ENCODE measurements at regions of chr1 and their contacts with region 1.

Region 1: GRCh38 chr1:27341525-27342252 is at the start of gene SYTL1:
- DNase-seq: peak; percentile 62
- H3K4me3 Mint-ChIP-seq: peak within 1 kb of the TSS; percentile 84
- H3K27ac Mint-ChIP-seq: peak within 1 kb of the TSS; percentile 87
- H3K4me1 Mint-ChIP-seq: peaks cover 45% of the 10 kb centered on the region
- H3K27me3 Mint-ChIP-seq: no peaks in the 10 kb centered on the region
- total RNA-seq, gene SYTL1: 20.0 and 25.7 TPM in 2 replicates

Region 2: DNA sequence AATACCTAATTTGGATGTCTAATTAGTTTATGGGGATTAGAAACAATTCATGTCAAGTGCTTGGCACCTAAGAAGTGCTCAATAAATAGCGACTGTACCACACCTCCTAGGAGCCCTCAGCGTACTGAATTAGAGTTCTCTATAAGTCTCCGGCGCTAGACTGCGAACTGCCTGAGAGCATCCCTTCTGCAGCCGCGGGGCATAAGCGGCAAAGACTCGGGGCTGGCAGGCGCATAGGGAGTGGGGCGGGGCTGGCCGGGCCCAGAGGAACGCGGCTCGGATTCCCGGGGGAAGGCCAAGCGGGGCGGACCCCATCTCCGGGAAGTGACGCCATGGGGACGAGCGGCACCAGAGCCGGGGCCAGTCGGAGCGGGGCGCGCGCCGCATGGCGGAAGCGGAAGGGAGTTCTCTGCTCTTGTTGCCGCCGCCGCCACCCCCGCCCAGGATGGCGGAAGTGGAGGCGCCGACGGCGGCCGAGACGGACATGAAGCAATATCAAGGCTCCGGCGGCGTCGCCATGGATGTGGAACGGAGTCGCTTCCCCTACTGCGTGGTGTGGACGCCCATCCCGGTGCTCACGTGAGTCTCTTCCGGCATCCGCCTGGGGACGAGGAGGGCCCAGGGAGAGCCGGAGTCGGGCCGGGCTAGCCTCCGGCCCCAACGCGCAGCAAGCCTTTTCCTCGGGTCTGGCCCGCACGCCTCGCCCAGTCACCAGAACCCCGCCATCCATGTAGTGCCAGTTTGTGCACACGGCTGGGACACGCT is 19.7 kb before region 1 on chr1 and contains the start of gene TMEM222:
- intact Hi-C with region 1: loop called (anchors 1 kb)
- DNase-seq: peak; percentile 97
- H3K4me3 Mint-ChIP-seq: peak within 1 kb of the TSS; percentile 97
- H3K27ac Mint-ChIP-seq: peak within 1 kb of the TSS; percentile 90
- H3K4me1 Mint-ChIP-seq: peaks cover 24% of the 10 kb centered on the region
- H3K27me3 Mint-ChIP-seq: peaks cover 3% of the 10 kb centered on the region
- total RNA-seq, gene TMEM222: 32.1 and 35.7 TPM in 2 replicates

Region 3: GRCh38 chr1:27357281-27358037 is 15.8 kb after region 1 on chr1:
- intact Hi-C with region 1: loop called (anchors 1 kb)
- DNase-seq: peak; percentile 81
- H3K4me3 Mint-ChIP-seq: peak overlapping the region; percentile 56
- H3K27ac Mint-ChIP-seq: peak overlapping the region; percentile 76
- H3K4me1 Mint-ChIP-seq: peaks cover 27% of the 10 kb centered on the region
- H3K27me3 Mint-ChIP-seq: no peaks in the 10 kb centered on the region

Region 4: GRCh38 chr1:27365372-27366112 is 23.9 kb after region 1 on chr1:
- intact Hi-C with region 1: loop called (anchors 2 kb)
- DNase-seq: peak; percentile 68
- H3K4me3 Mint-ChIP-seq: peak overlapping the region; percentile 81
- H3K27ac Mint-ChIP-seq: peak overlapping the region; percentile 83
- H3K4me1 Mint-ChIP-seq: peaks cover 28% of the 10 kb centered on the region
- H3K27me3 Mint-ChIP-seq: no peaks in the 10 kb centered on the region

Region 5: GRCh38 chr1:27496604-27497155 is 155.0 kb after region 1 on chr1:
- intact Hi-C with region 1: no loop called
- DNase-seq: no peak
- H3K4me3 Mint-ChIP-seq: no peak overlapping the region
- H3K27ac Mint-ChIP-seq: no peak overlapping the region
- H3K4me1 Mint-ChIP-seq: peaks cover 6% of the 10 kb centered on the region
- H3K27me3 Mint-ChIP-seq: peaks cover 1% of the 10 kb centered on the region

Measured in activated T-helper 2 cell treated with anti-CD3 and anti-CD28 coated beads, Interferon-gamma antibody, Interleukin-2, Interleukin-4, amounts not matched to agents 10 μg/mL and 5 μg/mL and 100 μg/mL, durations not matched to agents 14 hours and 24 hours and 36 hours (primary cell).